Thyroid gland (tissue), 4 donors: ENCODE measurements at regions of chr16 and their contacts with region 1.

Region 1: GRCh38 chr16:54341892-54342776 is 55.5 kb upstream of the IRX3 start:
- DNase-seq: no peak
- H3K4me3 ChIP-seq: no peak overlapping the region
- H3K27ac ChIP-seq: no peak overlapping the region
- H3K4me1 ChIP-seq: no peaks in the 10 kb centered on the region
- H3K27me3 ChIP-seq: no peaks in the 10 kb centered on the region
- CTCF ChIP-seq: no peak
- POLR2A ChIP-seq: no peak

Region 2: GRCh38 chr16:53968454-53968853 is 373.7 kb before region 1 on chr16:
- intact Hi-C with region 1: no loop called
- DNase-seq: no peak
- H3K4me3 ChIP-seq: no peak overlapping the region
- H3K27ac ChIP-seq: no peak overlapping the region
- H3K4me1 ChIP-seq: peaks cover 0 to 6% of the 10 kb centered on the region in 2 donors
- H3K27me3 ChIP-seq: no peaks in the 10 kb centered on the region
- CTCF ChIP-seq: no peak
- POLR2A ChIP-seq: no peak

Region 3: DNA sequence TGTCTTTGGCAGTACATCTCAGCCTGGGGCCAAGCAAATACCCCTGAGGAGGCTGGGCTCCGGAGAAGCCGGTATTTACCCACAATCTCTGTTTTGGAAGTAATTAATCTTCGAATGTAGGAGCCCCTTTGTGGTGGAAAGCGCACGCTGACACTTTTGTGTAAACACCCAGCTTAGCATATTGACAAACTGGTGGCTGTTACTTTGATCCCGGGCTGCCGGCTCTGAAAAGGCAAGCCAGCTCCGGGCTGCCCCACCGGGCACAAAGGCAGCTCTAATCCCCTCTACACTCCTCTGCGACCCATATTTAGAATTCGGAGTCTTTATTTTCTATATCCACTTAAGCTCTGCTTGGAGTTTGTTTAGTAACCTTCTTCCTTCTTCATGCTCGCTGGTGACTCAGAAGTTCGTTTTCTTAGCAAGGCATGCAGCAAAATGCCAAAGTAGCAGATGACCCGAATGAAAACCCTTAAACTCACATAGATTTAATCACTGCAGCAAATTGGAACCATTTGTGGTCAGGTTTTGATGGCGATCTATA is 88.4 kb after region 1 on chr16:
- intact Hi-C with region 1: loop called (anchors 10 kb)
- DNase-seq: peak in 1 of 2 donors; percentile 40
- H3K4me3 ChIP-seq: no peak overlapping the region
- H3K27ac ChIP-seq: peak overlapping the region; percentile 87 to 96 (median 90)
- H3K4me1 ChIP-seq: peaks cover 31 to 35% of the 10 kb centered on the region in 2 donors
- H3K27me3 ChIP-seq: no peaks in the 10 kb centered on the region
- CTCF ChIP-seq: no peak
- POLR2A ChIP-seq: no peak

Region 4: GRCh38 chr16:54489225-54490111 is 147.3 kb after region 1 on chr16:
- intact Hi-C with region 1: no loop called
- DNase-seq: no peak
- H3K4me3 ChIP-seq: no peak overlapping the region
- H3K27ac ChIP-seq: no peak overlapping the region
- H3K4me1 ChIP-seq: no peaks in the 10 kb centered on the region
- H3K27me3 ChIP-seq: no peaks in the 10 kb centered on the region
- CTCF ChIP-seq: no peak
- POLR2A ChIP-seq: no peak